HCT116 (cell line): ENCODE measurements at regions of chr5 and their contacts with region 1.

Region 1: DNA sequence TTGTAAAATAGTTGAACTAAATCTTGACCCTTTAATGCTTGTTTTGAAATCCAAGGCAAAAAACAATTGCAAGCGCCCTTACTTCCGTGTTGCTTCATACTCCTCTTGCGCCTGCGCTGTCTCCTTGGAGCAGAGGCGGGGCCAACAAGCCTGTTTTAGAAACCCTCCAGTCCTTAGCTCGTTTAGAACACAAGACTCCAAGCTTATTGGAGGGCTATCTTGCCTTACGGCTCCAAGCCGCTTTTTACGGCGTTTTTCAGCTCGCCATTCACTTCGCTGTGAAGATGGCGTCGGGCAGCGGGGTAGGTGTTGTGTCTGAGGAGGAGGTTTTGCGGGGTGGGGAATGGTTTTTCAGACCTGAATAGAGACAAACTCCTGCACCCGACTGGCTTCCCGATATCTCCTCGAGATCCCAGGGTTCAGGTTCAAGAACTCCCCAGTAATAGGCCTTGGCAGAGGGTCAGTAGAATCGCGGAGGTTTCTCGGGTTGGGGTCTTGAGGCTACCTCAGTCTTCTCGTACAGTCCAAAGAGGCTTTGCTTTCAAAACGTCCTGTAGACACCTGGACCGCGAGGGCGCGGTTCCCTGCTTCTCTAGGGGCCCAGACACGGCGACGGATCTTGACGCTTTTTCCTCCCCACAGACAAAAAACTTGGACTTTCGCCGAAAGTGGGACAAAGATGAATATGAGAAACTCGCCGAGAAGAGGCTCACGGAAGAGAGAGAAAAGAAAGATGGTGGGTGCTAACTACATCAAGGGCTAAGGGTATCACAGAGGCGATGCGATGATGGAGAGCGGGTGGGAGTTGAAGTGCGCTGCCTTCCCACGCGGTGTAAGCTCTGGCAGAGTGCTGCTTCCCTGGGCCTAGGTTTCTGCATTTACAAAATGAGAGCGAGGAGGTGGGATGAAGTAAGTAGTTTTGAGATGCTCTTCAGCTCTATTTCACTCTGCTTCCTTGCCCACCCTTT is at the start of gene ZMAT2:
- DNase-seq: peak; percentile 98
- ATAC-seq: peak; percentile 99
- H3K4me3 ChIP-seq: peak within 1 kb of the TSS; percentile 92
- H3K27ac ChIP-seq: peak within 1 kb of the TSS; percentile 54
- H3K4me1 ChIP-seq: peaks cover 3 to 12% of the 10 kb centered on the region in 2 experiments
- H3K27me3 ChIP-seq: no peaks in the 10 kb centered on the region
- CTCF ChIP-seq: no peak
- POLR2A ChIP-seq: no peak
- RAD21 ChIP-seq: no peak
- total RNA-seq, gene ZMAT2: 55.3 TPM

Region 2: DNA sequence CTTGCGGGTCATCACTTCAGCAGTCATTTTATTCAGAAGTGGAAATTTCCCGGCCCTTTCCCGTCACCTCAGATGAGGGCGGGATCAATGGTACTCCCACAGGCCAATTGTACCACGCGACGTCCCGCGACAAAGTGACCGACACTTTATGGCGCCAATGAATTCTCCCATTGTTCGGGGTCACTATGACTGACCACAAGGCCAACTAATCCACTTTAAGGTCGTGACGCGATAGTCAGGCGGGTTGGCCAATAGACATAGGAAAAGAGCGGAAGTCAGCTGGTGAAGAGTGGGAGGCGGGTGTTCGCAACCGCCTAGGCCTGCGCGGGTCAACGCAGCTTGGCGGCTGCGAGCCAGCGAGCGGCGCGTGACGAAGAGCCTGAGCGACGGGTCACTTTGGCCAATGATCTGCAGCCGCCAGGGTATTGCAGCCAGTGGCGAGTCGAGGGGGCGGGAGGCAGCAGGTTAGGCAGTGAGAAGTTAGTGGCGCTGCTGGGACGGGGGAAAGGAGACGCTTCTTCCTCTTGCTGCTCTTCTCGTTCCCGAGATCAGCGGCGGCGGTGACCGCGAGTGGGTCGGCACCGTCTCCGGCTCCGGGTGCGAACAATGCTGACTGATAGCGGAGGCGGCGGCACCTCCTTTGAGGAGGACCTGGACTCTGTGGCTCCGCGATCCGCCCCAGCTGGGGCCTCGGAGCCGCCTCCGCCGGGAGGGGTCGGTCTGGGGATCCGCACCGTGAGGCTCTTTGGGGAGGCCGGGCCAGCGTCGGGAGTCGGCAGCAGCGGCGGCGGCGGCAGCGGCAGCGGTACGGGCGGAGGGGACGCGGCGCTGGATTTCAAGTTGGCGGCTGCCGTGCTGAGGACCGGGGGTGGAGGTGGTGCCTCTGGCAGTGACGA is 298.9 kb before region 1 on chr5 and contains the start of gene ANKHD1:
- CTCF ChIA-PET with region 1: no interaction called
- POLR2A ChIA-PET with region 1: interaction called, 3 read pairs
- RAD21 ChIA-PET with region 1: no interaction called
- intact Hi-C with region 1: loop called (anchors 2 kb)
- DNase-seq: peak; percentile 100
- ATAC-seq: peak; percentile 80
- H3K4me3 ChIP-seq: peak within 1 kb of the TSS; percentile 81 to 99
- H3K27ac ChIP-seq: peak within 1 kb of the TSS; percentile 92
- H3K4me1 ChIP-seq: peaks cover 23 to 28% of the 10 kb centered on the region in 2 experiments
- H3K27me3 ChIP-seq: no peaks in the 10 kb centered on the region
- CTCF ChIP-seq: no peak
- POLR2A ChIP-seq: peak; percentile 40
- RAD21 ChIP-seq: no peak
- total RNA-seq, gene ANKHD1: 80.8 TPM

Region 3: GRCh38 chr5:140588311-140589070 is 112.0 kb before region 1 on chr5:
- CTCF ChIA-PET with region 1: no interaction called
- POLR2A ChIA-PET with region 1: no interaction called
- RAD21 ChIA-PET with region 1: no interaction called
- intact Hi-C with region 1: no loop called
- DNase-seq: no peak
- ATAC-seq: no peak
- H3K4me3 ChIP-seq: no peak overlapping the region
- H3K27ac ChIP-seq: no peak overlapping the region
- H3K4me1 ChIP-seq: no peaks in the 10 kb centered on the region; a peak in 1 of 4 replicates
- H3K27me3 ChIP-seq: no peaks in the 10 kb centered on the region
- CTCF ChIP-seq: no peak
- POLR2A ChIP-seq: no peak
- RAD21 ChIP-seq: no peak

Region 4: DNA sequence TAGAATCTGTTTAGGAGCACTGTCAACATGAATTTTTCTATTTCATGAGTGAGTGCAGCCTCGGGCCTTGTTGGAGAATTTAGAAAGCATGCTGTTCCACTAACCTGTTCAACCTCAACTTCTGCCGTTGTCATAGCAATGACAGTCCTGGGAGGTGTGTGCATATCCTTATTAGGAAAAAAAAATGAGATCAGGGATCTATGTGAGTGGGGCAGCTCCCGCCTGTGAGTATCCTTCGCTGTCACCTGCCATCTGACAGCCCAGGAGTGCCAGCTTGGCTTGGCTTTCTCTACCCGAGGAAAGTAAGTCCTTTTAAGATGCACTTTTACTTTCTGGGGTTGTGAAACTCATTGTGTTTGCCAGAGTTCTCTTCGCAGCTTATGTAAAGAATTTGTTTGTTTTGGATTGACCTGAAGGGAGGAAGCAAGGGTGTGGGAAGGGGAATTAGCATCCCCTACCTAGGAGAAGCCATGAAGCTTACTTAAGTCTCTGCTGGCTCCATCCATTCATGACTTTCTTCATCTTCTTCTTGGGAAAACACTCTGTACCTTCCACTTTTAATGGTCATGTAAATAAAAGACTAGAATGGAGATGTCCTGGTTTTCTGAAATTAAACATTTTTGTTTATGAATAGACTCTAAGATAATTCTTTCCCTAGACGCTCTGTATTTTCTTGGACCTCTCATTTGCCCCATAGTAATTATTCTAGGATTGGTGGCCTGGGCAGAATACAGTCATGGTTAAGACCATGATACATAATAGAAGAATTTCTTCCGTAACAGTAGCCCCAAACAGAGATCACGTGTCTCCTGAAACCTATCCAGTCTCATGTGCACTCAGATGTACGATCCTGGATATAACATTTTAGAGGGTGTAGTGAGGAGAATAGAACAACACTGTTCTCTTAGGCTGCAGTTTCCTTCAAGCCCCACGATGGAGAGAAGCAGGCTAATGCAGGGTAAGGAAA is 287.9 kb after region 1 on chr5:
- CTCF ChIA-PET with region 1: no interaction called
- POLR2A ChIA-PET with region 1: no interaction called
- RAD21 ChIA-PET with region 1: no interaction called
- intact Hi-C with region 1: no loop called
- DNase-seq: no peak
- ATAC-seq: no peak
- H3K4me3 ChIP-seq: no peak overlapping the region
- H3K27ac ChIP-seq: no peak overlapping the region
- H3K4me1 ChIP-seq: no peaks in the 10 kb centered on the region; a peak in 1 of 4 replicates
- H3K27me3 ChIP-seq: no peaks in the 10 kb centered on the region
- CTCF ChIP-seq: no peak
- POLR2A ChIP-seq: no peak
- RAD21 ChIP-seq: no peak